ENCODE measurements at regions of chr12 and their contacts with region 1.

Region 1: GRCh38 chr12:9331218-9331626 is 123.0 kb upstream of the PZP start:
- DNase-seq: peak; percentile 34 to 74
- ATAC-seq: peak; percentile 67 to 82 (median 79)
- H3K4me3 ChIP-seq: no peak overlapping the region
- H3K27ac ChIP-seq: no peak overlapping the region
- H3K4me1 ChIP-seq: peaks cover 0 to 4% (median 0%) of the 10 kb centered on the region in 9 donors
- H3K27me3 ChIP-seq: peaks cover 0 to 7% (median 0%) of the 10 kb centered on the region in 7 donors
- CTCF ChIP-seq: peak; percentile 85 to 99 (median 94)

Region 2: GRCh38 chr12:9240776-9241175 is 90.4 kb before region 1 on chr12:
- intact Hi-C with region 1: no loop called
- DNase-seq: peak in 1 of 2 donors; percentile 13
- ATAC-seq: peak in 6 of 8 donors; percentile 47 to 92 (median 82)
- H3K4me3 ChIP-seq: peak overlapping the region in 9 of 10 donors; percentile 20 to 60 (median 51)
- H3K27ac ChIP-seq: peak overlapping the region; percentile 37 to 86 (median 74)
- H3K4me1 ChIP-seq: peaks cover 0 to 28% (median 0%) of the 10 kb centered on the region in 9 donors
- H3K27me3 ChIP-seq: no peaks in the 10 kb centered on the region
- CTCF ChIP-seq: no peak

Region 3: DNA sequence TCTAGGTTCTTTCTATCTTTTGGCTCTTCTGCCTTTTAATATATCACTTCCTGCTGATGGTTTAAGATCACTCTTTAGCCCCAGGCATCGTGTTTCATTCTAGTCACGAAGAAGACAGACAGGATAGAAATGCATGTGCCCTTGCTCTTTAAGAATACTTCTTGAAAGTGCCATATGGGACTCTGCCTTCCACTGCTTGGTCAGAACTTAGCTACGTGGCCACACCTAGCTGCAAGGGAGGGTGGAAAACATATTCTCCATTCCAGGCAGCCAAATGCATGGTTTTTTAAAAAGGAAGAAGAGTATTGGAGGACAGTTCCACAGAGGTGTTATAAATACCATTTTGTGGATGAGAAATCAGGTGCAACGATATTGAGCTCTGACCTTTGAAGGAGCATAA is 133.2 kb after region 1 on chr12:
- intact Hi-C with region 1: loop called in 5 of 10 experiments (anchors 2 to 5 kb)
- DNase-seq: no peak
- ATAC-seq: no peak
- H3K4me3 ChIP-seq: no peak overlapping the region
- H3K27ac ChIP-seq: no peak overlapping the region
- H3K4me1 ChIP-seq: no peaks in the 10 kb centered on the region
- H3K27me3 ChIP-seq: no peaks in the 10 kb centered on the region
- CTCF ChIP-seq: no peak

Region 4: GRCh38 chr12:9707864-9708808 is 376.9 kb after region 1 on chr12:
- intact Hi-C with region 1: loop called in 7 of 10 experiments (anchors 5 to 10 kb)
- DNase-seq: peak; percentile 24 to 50
- ATAC-seq: peak in 7 of 8 donors; percentile 50 to 83 (median 69)
- H3K4me3 ChIP-seq: no peak overlapping the region
- H3K27ac ChIP-seq: peak overlapping the region in 1 of 10 donors; percentile 81
- H3K4me1 ChIP-seq: peaks cover 0 to 30% (median 0%) of the 10 kb centered on the region in 9 donors
- H3K27me3 ChIP-seq: no peaks in the 10 kb centered on the region
- CTCF ChIP-seq: peak; percentile 58 to 83 (median 79)

Measured in heart right ventricle (tissue), 16 donors.